ENCODE measurements at regions of chr3 and their contacts with region 1.

Region 1: DNA sequence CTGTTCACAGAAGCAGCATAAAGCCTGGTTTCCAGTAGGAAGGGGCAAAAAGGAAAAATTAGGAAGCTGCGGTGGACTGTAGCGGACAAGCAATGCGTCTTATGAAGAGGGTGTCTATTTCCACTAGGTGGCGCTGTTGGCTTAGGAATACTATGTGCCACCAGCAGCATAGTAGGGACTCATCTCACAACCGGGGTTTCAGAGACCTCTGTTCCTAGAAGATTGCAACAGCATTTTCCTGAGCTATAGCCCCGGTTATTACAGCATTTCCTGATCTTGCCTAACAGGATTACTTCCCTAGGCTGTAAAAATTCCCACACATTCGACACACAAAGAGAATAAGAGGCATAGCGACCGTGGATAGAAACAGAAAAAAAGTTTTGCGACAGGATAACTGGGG is 683.0 kb downstream of the TBL1XR1 start:
- DNase-seq: peak; percentile 62
- ATAC-seq: peak; percentile 96
- H3K4me3 ChIP-seq: no peak overlapping the region
- H3K27ac ChIP-seq: no peak overlapping the region
- H3K4me1 ChIP-seq: no peaks in the 10 kb centered on the region
- H3K27me3 ChIP-seq: no peaks in the 10 kb centered on the region
- CTCF ChIP-seq: peak; percentile 56 to 83 (median 65); a peak in 5 of 6 replicates
- POLR2A ChIP-seq: no peak
- RAD21 ChIP-seq: peak; percentile 93

Region 2: DNA sequence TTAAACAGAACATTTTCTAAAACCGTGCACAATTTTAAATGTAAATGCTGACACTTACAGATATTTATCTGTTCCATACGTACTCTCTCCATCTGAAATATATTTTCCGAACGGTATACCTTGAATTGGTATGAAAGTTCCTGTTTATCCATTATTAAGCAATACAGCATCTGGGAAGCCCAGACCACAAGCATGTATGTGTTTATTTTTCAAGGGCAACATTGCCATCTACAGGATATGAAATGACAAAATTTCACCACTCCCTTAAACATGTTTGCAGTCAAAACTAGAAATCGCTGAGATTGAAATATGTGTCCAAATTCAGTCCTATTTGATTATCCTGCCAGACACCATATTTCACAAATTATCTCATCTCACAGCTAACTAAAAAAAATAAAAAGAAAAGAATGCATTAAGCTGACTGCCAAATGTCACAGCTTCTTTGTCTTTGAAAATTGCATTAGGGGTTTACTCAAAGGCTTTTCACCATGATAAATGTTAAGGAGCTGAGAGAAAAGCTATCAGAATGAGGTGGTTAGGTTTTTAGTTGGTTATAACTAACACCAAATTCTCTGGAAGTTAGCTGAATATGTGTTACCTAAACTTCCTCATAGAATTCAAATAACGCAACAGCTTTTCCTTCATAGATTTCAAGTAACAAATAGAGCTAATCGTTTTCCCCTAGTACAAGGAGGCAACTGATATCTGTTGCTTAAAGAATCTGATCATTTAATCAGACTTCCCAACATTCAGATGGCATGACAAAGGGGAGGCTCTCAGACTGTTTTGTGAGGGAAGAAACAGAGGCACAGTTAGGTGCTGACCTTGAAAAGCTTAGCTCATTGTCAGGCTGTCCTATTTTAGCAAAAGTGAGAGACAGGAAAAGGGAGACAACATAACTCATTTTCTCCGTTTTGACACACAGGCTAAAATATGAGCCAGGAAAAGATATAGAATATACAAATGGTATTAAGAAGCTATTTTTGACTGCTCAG is 149.8 kb after region 1 on chr3:
- CTCF ChIA-PET with region 1: interaction called, 35 read pairs
- POLR2A ChIA-PET with region 1: no interaction called
- RAD21 ChIA-PET with region 1: interaction called in 1 of 2 experiments, 3 read pairs
- intact Hi-C with region 1: loop called (anchors 1 kb)
- DNase-seq: peak; percentile 33
- ATAC-seq: peak; percentile 81
- H3K4me3 ChIP-seq: no peak overlapping the region
- H3K27ac ChIP-seq: no peak overlapping the region
- H3K4me1 ChIP-seq: no peaks in the 10 kb centered on the region
- H3K27me3 ChIP-seq: no peaks in the 10 kb centered on the region
- CTCF ChIP-seq: peak in 2 of 3 experiments; percentile 26 to 55; a peak in 4 of 6 replicates
- POLR2A ChIP-seq: no peak
- RAD21 ChIP-seq: peak; percentile 74

Region 3: GRCh38 chr3:176814285-176814684 is 300.0 kb after region 1 on chr3:
- CTCF ChIA-PET with region 1: interaction called, 4 read pairs
- POLR2A ChIA-PET with region 1: no interaction called
- RAD21 ChIA-PET with region 1: no interaction called
- intact Hi-C with region 1: loop called (anchors 2 kb)
- DNase-seq: peak; percentile 54
- ATAC-seq: peak; percentile 100
- H3K4me3 ChIP-seq: no peak overlapping the region
- H3K27ac ChIP-seq: no peak overlapping the region
- H3K4me1 ChIP-seq: no peaks in the 10 kb centered on the region
- H3K27me3 ChIP-seq: no peaks in the 10 kb centered on the region
- CTCF ChIP-seq: peak; percentile 37 to 83 (median 78); a peak in 5 of 6 replicates
- POLR2A ChIP-seq: no peak
- RAD21 ChIP-seq: peak; percentile 72

Region 4: DNA sequence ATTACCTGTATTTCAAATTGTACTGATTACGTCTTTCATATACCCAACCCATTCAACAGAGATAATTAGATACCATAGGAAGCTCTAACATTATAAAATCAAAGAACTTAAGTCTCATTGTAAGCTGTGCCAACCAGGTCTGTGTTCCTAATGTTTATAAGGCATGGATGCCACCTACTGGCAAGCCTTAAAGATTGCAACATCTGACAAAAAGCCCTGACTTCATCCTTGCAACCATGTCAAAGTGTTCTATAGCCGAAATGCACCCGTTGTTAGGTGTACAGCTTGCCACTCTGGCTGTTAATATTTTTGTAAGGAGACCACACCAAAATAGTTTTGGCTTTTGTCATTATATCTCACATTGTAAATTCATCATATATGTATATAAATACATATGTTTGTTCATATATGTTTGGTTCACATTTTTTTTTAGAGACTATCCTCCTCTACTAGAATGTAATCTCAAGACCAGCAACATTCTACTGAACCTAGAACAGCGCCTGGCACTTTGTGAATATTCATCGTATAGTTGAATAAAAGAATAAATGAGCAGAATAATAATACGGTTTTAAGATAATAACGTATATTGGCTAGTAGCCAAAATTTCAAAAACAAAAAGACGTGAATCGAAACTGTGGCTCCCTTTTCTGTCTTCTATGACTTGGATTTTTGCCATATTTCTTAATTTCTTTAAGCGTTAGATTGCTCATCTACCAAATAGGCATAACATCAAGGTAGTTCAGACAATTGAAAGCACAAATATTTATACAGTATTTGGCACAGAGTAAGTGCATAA is 424.9 kb after region 1 on chr3:
- CTCF ChIA-PET with region 1: interaction called, 19 read pairs
- POLR2A ChIA-PET with region 1: no interaction called
- RAD21 ChIA-PET with region 1: interaction called, 3 to 6 read pairs
- intact Hi-C with region 1: loop called (anchors 1 kb)
- DNase-seq: peak; percentile 67
- ATAC-seq: peak; percentile 98
- H3K4me3 ChIP-seq: no peak overlapping the region
- H3K27ac ChIP-seq: no peak overlapping the region
- H3K4me1 ChIP-seq: no peaks in the 10 kb centered on the region
- H3K27me3 ChIP-seq: no peaks in the 10 kb centered on the region
- CTCF ChIP-seq: peak; percentile 61 to 81 (median 70); a peak in 5 of 6 replicates
- POLR2A ChIP-seq: no peak
- RAD21 ChIP-seq: peak; percentile 91

Region 5: GRCh38 chr3:177190756-177191681 is 676.7 kb after region 1 on chr3:
- CTCF ChIA-PET with region 1: no interaction called
- POLR2A ChIA-PET with region 1: no interaction called
- RAD21 ChIA-PET with region 1: no interaction called
- intact Hi-C with region 1: loop called (anchors 5 kb)
- DNase-seq: no peak
- ATAC-seq: no peak
- H3K4me3 ChIP-seq: no peak overlapping the region
- H3K27ac ChIP-seq: no peak overlapping the region
- H3K4me1 ChIP-seq: peaks cover 9 to 26% of the 10 kb centered on the region in 2 experiments; a peak in 3 of 4 replicates
- H3K27me3 ChIP-seq: no peaks in the 10 kb centered on the region
- CTCF ChIP-seq: no peak
- POLR2A ChIP-seq: no peak
- RAD21 ChIP-seq: no peak

Region 6: DNA sequence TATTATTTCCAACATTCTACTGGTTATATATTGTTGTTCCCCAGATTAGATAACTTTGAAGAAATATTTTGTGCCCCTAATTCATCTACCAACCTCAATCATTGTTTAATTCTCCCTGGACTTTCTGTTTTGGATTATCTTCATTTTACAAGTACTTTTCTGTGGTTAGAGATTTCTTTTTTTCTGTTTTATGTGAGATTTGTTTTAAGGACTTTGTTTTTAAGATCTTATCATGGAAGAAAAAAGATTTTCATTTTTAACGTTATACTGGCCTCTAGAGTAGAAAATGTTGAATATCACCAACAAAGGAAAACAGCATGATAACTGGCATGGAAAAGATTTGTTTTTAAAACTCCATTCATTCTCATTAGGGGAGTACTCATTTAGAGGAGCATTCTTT is 1811.0 kb after region 1 on chr3:
- CTCF ChIA-PET with region 1: no interaction called
- POLR2A ChIA-PET with region 1: no interaction called
- RAD21 ChIA-PET with region 1: no interaction called
- intact Hi-C with region 1: loop called (anchors 10 kb)
- DNase-seq: no peak
- ATAC-seq: no peak
- H3K4me3 ChIP-seq: no peak overlapping the region
- H3K27ac ChIP-seq: no peak overlapping the region
- H3K4me1 ChIP-seq: no peaks in the 10 kb centered on the region
- H3K27me3 ChIP-seq: no peaks in the 10 kb centered on the region
- CTCF ChIP-seq: peak in 2 of 3 experiments; percentile 14 to 51; a peak in 3 of 6 replicates
- POLR2A ChIP-seq: no peak
- RAD21 ChIP-seq: peak; percentile 62

Region 7: DNA sequence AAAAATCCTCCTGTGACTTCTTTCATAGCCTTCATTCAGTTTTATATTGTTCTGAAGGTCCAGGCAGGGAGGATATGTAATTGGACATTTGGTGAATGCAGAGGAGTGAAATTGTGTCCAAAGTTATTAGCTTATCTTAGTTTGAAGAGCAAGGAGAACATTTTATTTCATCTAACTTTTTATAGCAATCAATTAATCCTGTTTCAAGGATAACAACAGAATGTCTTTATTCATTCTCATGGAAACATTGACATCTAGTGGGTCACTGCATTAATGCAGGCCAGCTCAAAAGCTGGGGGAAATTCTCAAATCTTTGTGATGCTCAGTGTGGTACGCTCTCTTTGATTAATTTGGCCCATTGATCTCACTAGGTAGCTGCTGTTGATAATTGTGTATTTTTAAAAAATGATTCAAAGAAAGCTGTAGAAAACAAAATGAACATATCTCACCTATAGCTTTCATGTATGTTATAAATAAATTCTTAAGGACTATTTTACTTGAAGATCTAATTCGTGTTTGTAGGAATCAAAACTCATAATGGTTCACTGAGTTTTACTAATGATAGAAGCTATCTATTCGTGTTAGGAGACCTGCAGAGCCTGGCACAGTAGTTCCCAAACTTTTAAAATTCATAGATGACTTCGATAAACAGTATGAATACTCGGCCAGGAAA is 1871.1 kb after region 1 on chr3:
- CTCF ChIA-PET with region 1: interaction called, 5 read pairs
- POLR2A ChIA-PET with region 1: no interaction called
- RAD21 ChIA-PET with region 1: no interaction called
- intact Hi-C with region 1: loop called (anchors 1 kb)
- DNase-seq: peak; percentile 3
- ATAC-seq: peak; percentile 67
- H3K4me3 ChIP-seq: no peak overlapping the region
- H3K27ac ChIP-seq: no peak overlapping the region
- H3K4me1 ChIP-seq: no peaks in the 10 kb centered on the region
- H3K27me3 ChIP-seq: no peaks in the 10 kb centered on the region
- CTCF ChIP-seq: peak; percentile 40 to 84 (median 56); a peak in 5 of 6 replicates
- POLR2A ChIP-seq: no peak
- RAD21 ChIP-seq: peak; percentile 85

Measured in HCT116 (cell line).